ENCODE measurements at regions of chr6 and their contacts with region 1.

Region 1: DNA sequence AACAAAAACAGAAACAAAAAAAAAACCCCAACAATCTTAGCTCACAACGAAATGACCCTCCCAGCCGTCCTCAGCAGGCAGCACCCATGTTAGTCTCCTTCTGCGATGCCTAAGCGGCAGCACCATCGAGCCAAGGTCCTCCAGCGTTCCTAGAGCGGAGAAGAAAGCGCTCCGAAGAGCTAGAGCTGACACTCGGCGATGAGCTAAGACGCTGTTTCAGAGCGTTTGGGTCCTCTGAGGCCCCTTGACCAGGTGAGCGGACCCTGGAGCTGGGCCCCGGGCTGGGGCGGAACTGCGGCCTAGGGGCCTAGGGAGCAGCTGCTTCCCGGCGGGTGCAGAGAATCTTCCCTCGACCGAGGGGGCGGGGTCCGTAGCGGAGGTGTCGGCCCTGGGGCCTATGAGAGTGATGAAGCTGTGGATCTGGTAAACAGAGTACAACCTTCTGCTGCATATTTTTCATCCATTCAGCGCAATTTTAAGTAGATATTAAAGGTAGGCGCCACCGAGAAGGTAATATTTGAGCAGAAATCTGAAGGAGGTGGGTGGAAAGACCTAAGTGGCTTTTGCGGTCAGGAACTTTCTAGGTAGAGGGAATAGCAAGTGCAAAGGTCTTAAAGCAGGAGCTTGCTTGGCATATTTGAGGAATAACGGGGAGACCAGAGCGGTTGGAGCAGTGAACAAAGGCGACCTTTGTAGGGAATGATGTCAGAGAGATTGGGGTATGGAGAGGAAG is at the start of gene ZSCAN26:
- DNase-seq: peak; percentile 86 to 90 (median 88)
- H3K4me3 ChIP-seq: peak within 1 kb of the TSS; percentile 90 to 94
- H3K4me3 Mint-ChIP-seq: peak within 1 kb of the TSS in 1 of 8 donors; percentile 12
- H3K27ac ChIP-seq: peak within 1 kb of the TSS; percentile 70
- H3K27ac Mint-ChIP-seq: no peak within 1 kb of the TSS
- H3K4me1 ChIP-seq: peaks cover 18% of the 10 kb centered on the region
- H3K4me1 Mint-ChIP-seq: peaks cover 4 to 15% (median 11%) of the 10 kb centered on the region in 4 donors
- H3K27me3 ChIP-seq: no peaks in the 10 kb centered on the region
- H3K27me3 Mint-ChIP-seq: peaks cover 0 to under 1% of the 10 kb centered on the region in 2 donors
- total RNA-seq, gene ZSCAN26: 23.3 to 26.5 TPM

Region 2: GRCh38 chr6:28104392-28105244 is 162.5 kb before region 1 on chr6:
- CTCF ChIA-PET with region 1: interaction called, 9 read pairs
- POLR2A ChIA-PET with region 1: interaction called, 21 read pairs
- intact Hi-C with region 1: no loop called
- DNase-seq: peak; percentile 79 to 83 (median 82)
- H3K4me3 ChIP-seq: peak overlapping the region; percentile 59 to 67
- H3K4me3 Mint-ChIP-seq: peak overlapping the region; percentile 85 to 96 (median 92)
- H3K27ac ChIP-seq: peak overlapping the region; percentile 72
- H3K27ac Mint-ChIP-seq: peak overlapping the region; percentile 80 to 97 (median 93)
- H3K4me1 ChIP-seq: peaks cover 13% of the 10 kb centered on the region
- H3K4me1 Mint-ChIP-seq: peaks cover 3 to 17% (median 11%) of the 10 kb centered on the region in 4 donors
- H3K27me3 ChIP-seq: no peaks in the 10 kb centered on the region
- H3K27me3 Mint-ChIP-seq: peaks cover 3 to 11% of the 10 kb centered on the region in 2 donors

Region 3: DNA sequence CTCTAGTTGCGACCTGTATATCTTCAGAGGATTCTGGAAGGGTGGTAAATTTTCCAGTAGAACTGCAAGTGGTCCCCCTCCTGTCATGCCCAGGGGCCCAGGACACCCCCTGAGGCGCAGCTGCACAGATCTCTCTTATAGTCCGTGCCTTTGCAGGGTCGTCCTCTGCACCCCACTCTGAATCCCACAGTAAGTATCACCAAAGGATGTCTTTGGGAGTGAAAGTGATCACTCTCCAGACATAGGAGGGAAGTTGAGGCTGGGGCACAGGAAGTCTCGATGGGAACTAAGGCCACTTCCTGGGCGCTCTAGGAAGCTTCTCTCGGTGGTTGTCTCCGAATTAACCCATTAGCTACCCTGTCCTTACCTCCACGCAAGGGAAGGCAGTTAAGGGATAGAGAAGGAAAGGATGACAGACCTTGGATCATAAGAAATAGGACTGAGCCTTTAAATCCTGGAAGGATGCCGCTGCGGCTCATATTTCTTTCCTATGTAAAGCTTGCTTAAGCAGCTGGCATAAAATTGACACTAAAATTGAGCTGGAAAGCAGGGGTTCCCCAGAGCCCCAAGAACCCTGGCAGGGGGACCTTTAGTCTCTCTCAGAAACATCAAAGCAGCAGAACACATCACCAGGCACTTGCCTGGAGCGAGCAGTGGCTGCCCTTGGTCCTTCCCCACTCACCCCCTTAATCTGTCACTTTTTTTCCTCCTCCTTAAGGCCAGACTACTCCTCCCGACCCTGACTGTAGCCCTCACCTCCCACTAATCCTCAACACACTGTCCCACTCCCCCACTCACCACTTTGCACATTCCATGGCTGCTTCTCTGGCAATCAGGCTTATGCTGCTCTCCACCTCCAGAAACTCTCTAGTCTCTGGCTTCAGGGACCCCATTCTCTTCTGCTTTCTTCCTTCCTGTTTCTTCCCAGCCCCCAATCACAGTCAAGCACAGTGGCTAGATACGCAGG is 14.8 kb before region 1 on chr6 and contains the start of gene ZKSCAN4:
- CTCF ChIA-PET with region 1: interaction called, 23 read pairs
- POLR2A ChIA-PET with region 1: interaction called, 111 read pairs
- intact Hi-C with region 1: loop called (anchors 1 kb)
- DNase-seq: peak; percentile 79 to 82 (median 80)
- H3K4me3 ChIP-seq: peak within 1 kb of the TSS; percentile 98 to 99
- H3K4me3 Mint-ChIP-seq: peak within 1 kb of the TSS; percentile 94 to 99 (median 97)
- H3K27ac ChIP-seq: peak within 1 kb of the TSS; percentile 52
- H3K27ac Mint-ChIP-seq: peak within 1 kb of the TSS; percentile 75 to 95 (median 89)
- H3K4me1 ChIP-seq: peaks cover 22% of the 10 kb centered on the region
- H3K4me1 Mint-ChIP-seq: peaks cover 22 to 38% (median 31%) of the 10 kb centered on the region in 4 donors
- H3K27me3 ChIP-seq: no peaks in the 10 kb centered on the region
- H3K27me3 Mint-ChIP-seq: no peaks in the 10 kb centered on the region
- total RNA-seq, gene ZKSCAN4: 9.9 to 11.1 TPM

Region 4: DNA sequence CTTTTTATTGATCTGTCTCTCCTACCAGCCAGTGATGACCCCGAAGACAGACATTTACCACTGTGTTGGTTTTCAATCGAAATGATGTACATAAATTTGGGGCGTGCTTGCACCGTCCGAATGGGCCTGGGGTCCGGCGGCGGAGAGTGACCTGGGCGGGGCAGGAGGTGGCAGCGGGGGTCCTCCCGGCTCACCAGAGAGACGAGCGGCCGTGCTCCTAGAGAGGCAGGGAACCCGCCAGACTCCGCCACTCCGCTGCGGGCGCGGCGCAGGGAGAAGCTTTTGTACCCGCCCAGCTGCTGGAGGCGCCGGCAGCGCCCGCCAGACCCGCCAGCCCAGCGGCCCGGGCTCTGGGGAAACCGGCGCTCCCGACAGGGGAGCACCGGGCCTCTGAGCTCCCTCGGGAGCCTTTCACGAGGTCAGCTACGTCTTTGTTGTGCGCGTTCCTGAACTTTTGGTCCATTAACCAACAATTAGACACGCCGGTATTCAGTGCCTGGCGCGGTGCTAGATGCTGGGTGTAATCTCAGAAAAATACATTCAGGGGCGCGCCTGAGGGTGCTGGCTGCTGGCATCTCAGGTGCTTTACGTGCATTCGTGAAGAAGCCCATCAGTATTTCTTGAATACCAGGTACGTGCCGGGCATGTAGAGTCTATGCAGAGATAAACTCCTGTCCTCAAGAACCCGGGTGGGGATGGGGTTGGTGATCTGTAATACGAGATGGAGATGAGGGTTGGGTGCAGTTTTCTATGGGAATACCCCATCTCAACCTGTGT is 14.3 kb after region 1 on chr6 and contains the start of gene PGBD1:
- CTCF ChIA-PET with region 1: interaction called, 4 read pairs
- POLR2A ChIA-PET with region 1: interaction called, 15 read pairs
- intact Hi-C with region 1: no loop called
- DNase-seq: peak in 4 of 5 donors; percentile 18 to 40 (median 27)
- H3K4me3 ChIP-seq: peak within 1 kb of the TSS in 1 of 2 donors; percentile 37
- H3K4me3 Mint-ChIP-seq: peak within 1 kb of the TSS; percentile 63 to 79 (median 75)
- H3K27ac ChIP-seq: no peak within 1 kb of the TSS
- H3K27ac Mint-ChIP-seq: peak within 1 kb of the TSS in 1 of 7 donors; percentile 28
- H3K4me1 ChIP-seq: peaks cover 6% of the 10 kb centered on the region
- H3K4me1 Mint-ChIP-seq: peaks cover 4 to 8% (median 7%) of the 10 kb centered on the region in 4 donors
- H3K27me3 ChIP-seq: no peaks in the 10 kb centered on the region
- H3K27me3 Mint-ChIP-seq: peaks cover 16 to 31% of the 10 kb centered on the region in 2 donors
- total RNA-seq, gene PGBD1: 1.1 to 1.4 TPM

Region 5: GRCh38 chr6:28335564-28336283 is 68.6 kb after region 1 on chr6 and contains the start of gene ZSCAN31:
- CTCF ChIA-PET with region 1: interaction called, 5 read pairs
- POLR2A ChIA-PET with region 1: interaction called, 27 read pairs
- intact Hi-C with region 1: loop called (anchors 1 kb)
- DNase-seq: peak; percentile 77 to 93 (median 81)
- H3K4me3 ChIP-seq: peak within 1 kb of the TSS; percentile 61 to 85
- H3K4me3 Mint-ChIP-seq: peak within 1 kb of the TSS in 1 of 8 donors; percentile 34
- H3K27ac ChIP-seq: peak within 1 kb of the TSS; percentile 87
- H3K27ac Mint-ChIP-seq: peak within 1 kb of the TSS in 1 of 7 donors; percentile 68
- H3K4me1 ChIP-seq: peaks cover 17% of the 10 kb centered on the region
- H3K4me1 Mint-ChIP-seq: peaks cover 0 to 4% (median 3%) of the 10 kb centered on the region in 4 donors
- H3K27me3 ChIP-seq: no peaks in the 10 kb centered on the region
- H3K27me3 Mint-ChIP-seq: peaks cover 0 to 3% of the 10 kb centered on the region in 2 donors
- total RNA-seq, gene ZSCAN31: 0.73 to 0.97 TPM

Region 6: GRCh38 chr6:28349892-28350737 is 83.0 kb after region 1 on chr6 and contains the start of gene ZKSCAN3:
- CTCF ChIA-PET with region 1: interaction called, 31 read pairs
- POLR2A ChIA-PET with region 1: interaction called, 14 read pairs
- intact Hi-C with region 1: loop called (anchors 1 kb)
- DNase-seq: peak; percentile 75 to 85 (median 79)
- H3K4me3 ChIP-seq: peak within 1 kb of the TSS; percentile 54 to 74
- H3K4me3 Mint-ChIP-seq: peak within 1 kb of the TSS; percentile 96 to 100 (median 99)
- H3K27ac ChIP-seq: peak within 1 kb of the TSS; percentile 57
- H3K27ac Mint-ChIP-seq: peak within 1 kb of the TSS; percentile 78 to 99 (median 97)
- H3K4me1 ChIP-seq: peaks cover 20% of the 10 kb centered on the region
- H3K4me1 Mint-ChIP-seq: peaks cover 23 to 34% (median 28%) of the 10 kb centered on the region in 4 donors
- H3K27me3 ChIP-seq: no peaks in the 10 kb centered on the region
- H3K27me3 Mint-ChIP-seq: peaks cover 8 to 14% of the 10 kb centered on the region in 2 donors
- total RNA-seq, gene ZKSCAN3: 12.4 to 12.6 TPM

Measured in CD4-positive, alpha-beta memory T cell (primary cell).